CD4-positive, alpha-beta T cell (primary cell): ENCODE measurements at regions of chr2 and their contacts with region 1.

Region 1: GRCh38 chr2:182784777-182785176 is 68.7 kb downstream of the DNAJC10 start:
- DNase-seq: peak in 1 of 14 experiments; percentile 6
- ATAC-seq: no peak
- H3K4me3 ChIP-seq: no peak overlapping the region
- H3K4me3 Mint-ChIP-seq: no peak overlapping the region
- H3K27ac ChIP-seq: no peak overlapping the region
- H3K27ac Mint-ChIP-seq: no peak overlapping the region
- H3K4me1 ChIP-seq: no peaks in the 10 kb centered on the region
- H3K4me1 Mint-ChIP-seq: no peaks in the 10 kb centered on the region
- H3K27me3 ChIP-seq: no peaks in the 10 kb centered on the region
- H3K27me3 Mint-ChIP-seq: no peaks in the 10 kb centered on the region
- CTCF ChIP-seq: no peak

Region 2: DNA sequence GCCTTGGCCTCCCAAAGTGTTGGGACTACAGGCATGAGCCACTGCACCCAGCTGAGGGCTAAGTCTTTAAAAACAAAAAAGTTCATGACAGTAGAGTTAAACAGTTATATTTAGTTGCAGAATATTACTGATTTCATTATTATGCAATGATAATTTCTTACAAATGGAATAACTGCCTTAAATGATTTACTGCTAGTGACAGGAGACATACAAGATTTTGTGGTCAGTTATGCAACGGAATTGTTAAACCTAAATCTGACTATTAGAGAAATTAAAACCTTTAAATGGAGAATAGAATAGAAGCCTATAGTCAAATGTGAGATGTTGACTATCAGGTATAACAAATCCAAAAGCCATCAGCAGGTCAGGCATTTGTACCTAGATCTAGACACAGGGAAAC is 79.0 kb before region 1 on chr2:
- CTCF ChIA-PET with region 1: no interaction called
- POLR2A ChIA-PET with region 1: no interaction called
- intact Hi-C with region 1: no loop called
- DNase-seq: no peak
- ATAC-seq: no peak
- H3K4me3 ChIP-seq: no peak overlapping the region
- H3K4me3 Mint-ChIP-seq: no peak overlapping the region
- H3K27ac ChIP-seq: no peak overlapping the region
- H3K27ac Mint-ChIP-seq: no peak overlapping the region
- H3K4me1 ChIP-seq: no peaks in the 10 kb centered on the region
- H3K4me1 Mint-ChIP-seq: no peaks in the 10 kb centered on the region
- H3K27me3 ChIP-seq: peaks cover 0 to 19% of the 10 kb centered on the region in 2 experiments
- H3K27me3 Mint-ChIP-seq: peaks cover 49% of the 10 kb centered on the region
- CTCF ChIP-seq: no peak

Region 3: GRCh38 chr2:182807319-182807718 is 22.5 kb after region 1 on chr2:
- CTCF ChIA-PET with region 1: no interaction called
- POLR2A ChIA-PET with region 1: no interaction called
- intact Hi-C with region 1: loop called in 1 of 2 experiments (anchors 1 kb)
- DNase-seq: no peak
- ATAC-seq: no peak
- H3K4me3 ChIP-seq: no peak overlapping the region
- H3K4me3 Mint-ChIP-seq: no peak overlapping the region
- H3K27ac ChIP-seq: no peak overlapping the region
- H3K27ac Mint-ChIP-seq: no peak overlapping the region
- H3K4me1 ChIP-seq: no peaks in the 10 kb centered on the region
- H3K4me1 Mint-ChIP-seq: no peaks in the 10 kb centered on the region
- H3K27me3 ChIP-seq: peaks cover 0 to 9% of the 10 kb centered on the region in 2 experiments
- H3K27me3 Mint-ChIP-seq: peaks cover 22% of the 10 kb centered on the region
- CTCF ChIP-seq: no peak